Right ventricle myocardium superior (tissue), 1 donor: ENCODE measurements at regions of chr7 and their contacts with region 1.

Region 1: DNA sequence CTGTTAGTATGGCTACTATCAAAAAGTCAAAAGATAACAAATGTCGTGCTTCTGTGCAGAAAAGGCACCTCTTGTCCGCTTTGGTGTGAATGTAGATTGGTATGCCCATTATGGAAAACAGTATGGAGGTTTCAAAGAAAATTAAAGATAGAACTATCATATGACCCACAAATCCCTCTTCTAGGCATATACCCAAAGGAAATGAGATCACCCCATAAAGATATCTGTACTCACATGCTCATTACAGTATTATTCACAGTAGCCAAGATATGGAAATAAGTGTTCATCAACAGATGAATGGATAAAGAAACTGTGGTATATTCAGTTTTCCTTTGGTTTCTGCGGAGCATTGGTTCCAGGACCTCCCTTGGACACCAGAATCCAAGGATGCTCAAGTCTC is 180.5 kb upstream of the PPP1R3A start:
- DNase-seq: no peak
- ATAC-seq: no peak

Region 2: DNA sequence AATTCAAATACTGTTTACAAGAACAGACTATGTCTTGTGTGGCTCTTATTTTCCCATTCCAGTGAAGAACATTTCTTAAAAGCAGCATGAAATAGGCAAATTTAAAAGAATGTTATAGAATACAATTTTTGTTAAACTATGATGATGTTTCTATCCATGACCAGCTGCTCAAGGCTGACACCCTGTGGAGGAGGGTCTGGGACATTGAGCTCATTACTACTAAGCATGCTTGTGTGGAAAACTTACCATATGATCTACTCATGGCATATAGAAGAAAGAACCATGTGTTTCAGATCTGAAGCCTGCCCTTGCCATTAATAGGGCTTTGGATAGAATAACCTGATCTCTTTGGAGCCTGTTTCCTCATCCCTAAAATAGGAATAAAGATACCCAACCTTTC is 440.2 kb after region 1 on chr7:
- intact Hi-C with region 1: loop called (anchors 10 kb)
- DNase-seq: no peak
- ATAC-seq: no peak